ENCODE measurements at regions of chr15 and their contacts with region 1.

Region 1: DNA sequence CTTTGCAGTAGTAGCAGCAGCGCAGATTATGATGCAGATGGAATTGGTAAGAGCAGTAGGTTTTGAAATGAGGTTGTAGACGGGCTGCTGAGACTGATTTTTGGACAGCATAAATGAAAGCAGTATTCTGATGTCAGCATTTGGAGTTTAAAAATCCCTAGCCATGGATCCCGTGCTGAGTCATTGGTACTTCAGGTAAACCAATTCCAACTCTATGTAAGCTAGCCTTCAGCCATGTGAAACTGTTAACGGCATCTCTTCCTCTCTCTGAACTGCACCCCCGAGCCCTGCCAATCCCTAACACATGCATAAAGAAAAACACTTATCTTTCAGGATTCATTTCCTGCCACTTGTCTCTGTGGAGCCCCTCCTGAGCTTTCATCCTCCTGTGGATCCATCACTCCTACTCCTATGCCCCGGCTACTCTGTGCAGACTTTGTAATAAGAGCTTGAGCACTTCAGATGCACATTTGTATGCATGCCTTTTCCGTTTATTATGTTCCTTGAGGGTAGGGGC is 119.0 kb downstream of the AKAP13 start:
- DNase-seq: no peak
- H3K4me3 ChIP-seq: no peak overlapping the region
- CTCF ChIP-seq: no peak

Region 2: GRCh38 chr15:85539491-85539890 is 40.1 kb after region 1 on chr15:
- in situ Hi-C with region 1: loop called (anchors 5 kb)
- DNase-seq: no peak
- H3K4me3 ChIP-seq: no peak overlapping the region
- CTCF ChIP-seq: no peak

Region 3: DNA sequence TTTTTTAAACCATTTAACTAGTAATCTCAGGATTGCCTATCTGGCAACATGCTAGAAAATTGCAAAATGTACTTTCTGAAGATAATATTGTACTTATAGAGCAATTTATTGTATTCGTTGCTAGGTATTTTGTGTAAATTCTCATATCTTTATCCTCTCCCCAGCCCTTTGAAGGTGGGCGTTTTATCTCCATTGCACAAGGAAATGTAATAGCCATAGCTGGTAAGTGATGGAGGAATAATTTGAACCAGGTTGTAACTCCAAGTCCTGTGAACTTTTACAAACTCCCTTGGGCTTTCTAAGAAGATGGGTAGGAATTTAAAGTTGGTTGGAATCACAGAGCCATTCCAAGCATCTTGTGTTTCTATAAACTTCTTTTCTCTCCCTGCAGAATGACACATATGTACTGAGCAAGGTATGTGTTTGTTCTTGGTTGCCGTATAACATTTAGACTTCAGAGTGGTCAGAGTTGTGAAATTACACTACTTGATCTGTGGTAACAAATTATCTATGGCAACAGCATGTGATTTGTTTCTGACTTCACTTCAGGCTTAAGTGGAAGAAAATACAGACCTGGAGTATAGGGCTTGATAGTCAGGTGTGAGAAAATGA is 51.9 kb after region 1 on chr15:
- in situ Hi-C with region 1: no loop called
- DNase-seq: no peak
- H3K4me3 ChIP-seq: no peak overlapping the region
- CTCF ChIP-seq: no peak